Tibial artery (tissue), 4 donors: ENCODE measurements at regions of chr18 and their contacts with region 1.

Region 1: GRCh38 chr18:50374753-50375391 is at the start of gene SKA1:
- DNase-seq: peak; percentile 85 to 94
- H3K4me3 ChIP-seq: peak within 1 kb of the TSS; percentile 45 to 59
- H3K27ac ChIP-seq: peak within 1 kb of the TSS; percentile 56 to 77
- H3K4me1 ChIP-seq: peaks cover 0 to 12% (median 7%) of the 10 kb centered on the region in 4 donors
- H3K27me3 ChIP-seq: no peaks in the 10 kb centered on the region
- CTCF ChIP-seq: no peak

Region 2: DNA sequence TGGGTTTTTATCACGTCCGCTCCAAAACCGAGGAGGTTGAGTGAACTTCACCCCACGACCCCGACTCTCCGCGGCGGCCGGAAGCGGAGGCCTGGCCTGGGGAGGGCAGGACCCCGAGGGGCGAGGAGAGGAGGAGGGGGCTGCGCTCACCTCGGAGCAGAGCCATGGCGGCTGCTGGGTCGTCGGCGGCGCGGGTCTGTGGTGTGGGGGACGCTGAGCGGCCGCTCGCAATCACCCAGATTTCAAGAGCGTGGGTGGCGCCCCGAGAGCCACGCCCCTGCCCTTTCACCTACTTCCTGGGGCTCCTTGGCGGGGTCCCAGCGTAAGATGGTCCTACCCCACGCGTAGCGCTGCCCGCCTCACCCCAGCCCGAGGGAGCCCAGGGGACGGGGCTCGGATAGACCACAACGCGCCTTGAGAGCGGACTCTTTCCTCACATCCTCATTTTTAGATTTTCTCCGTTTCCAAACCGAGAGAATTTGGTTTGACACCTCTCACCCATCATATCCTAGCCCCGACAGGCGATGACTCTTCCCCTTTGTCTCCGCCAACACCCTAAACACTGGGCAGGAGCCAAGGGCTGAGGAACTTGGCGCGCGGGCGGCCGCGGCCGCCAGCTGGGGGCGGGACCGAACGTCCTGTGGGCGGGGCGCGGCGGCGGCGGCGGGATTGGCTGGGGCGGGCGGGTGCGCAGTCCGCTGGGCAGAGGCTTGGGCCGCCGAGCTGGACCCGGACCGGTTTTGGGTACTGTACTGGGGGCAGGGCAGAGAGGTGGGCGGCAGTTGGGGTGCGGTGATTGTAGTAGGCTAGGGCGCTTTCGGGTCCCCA is 561.3 kb before region 1 on chr18 and contains the start of gene ACAA2:
- intact Hi-C with region 1: loop called (anchors 10 kb)
- DNase-seq: peak; percentile 78 to 93
- H3K4me3 ChIP-seq: peak within 1 kb of the TSS; percentile 71 to 76
- H3K27ac ChIP-seq: peak within 1 kb of the TSS; percentile 93 to 97
- H3K4me1 ChIP-seq: peaks cover 0 to 14% (median 5%) of the 10 kb centered on the region in 4 donors
- H3K27me3 ChIP-seq: no peaks in the 10 kb centered on the region
- CTCF ChIP-seq: no peak

Region 3: DNA sequence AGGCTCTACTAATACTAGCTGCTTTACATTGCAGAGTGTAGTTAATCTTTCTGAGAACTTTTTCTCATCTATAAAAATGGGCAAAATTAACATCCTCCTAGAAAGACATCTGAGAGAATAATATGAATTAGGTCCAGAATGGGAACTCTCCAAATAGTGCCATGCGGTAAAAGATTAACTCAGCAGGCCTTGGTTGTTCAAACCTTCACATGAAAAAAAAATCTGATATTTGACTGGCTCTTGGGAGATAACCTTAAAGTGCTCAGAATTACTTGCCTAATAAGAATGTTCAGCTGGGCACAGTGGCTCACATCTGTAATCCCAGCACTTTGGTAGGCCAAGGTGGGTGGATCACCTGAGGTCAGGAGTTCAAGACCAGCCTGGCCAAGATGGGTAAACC is 81.8 kb before region 1 on chr18:
- intact Hi-C with region 1: loop called (anchors 5 kb)
- DNase-seq: no peak
- H3K4me3 ChIP-seq: no peak overlapping the region
- H3K27ac ChIP-seq: no peak overlapping the region
- H3K4me1 ChIP-seq: peaks cover 0 to 6% (median 2%) of the 10 kb centered on the region in 4 donors
- H3K27me3 ChIP-seq: peaks cover 0 to 7% of the 10 kb centered on the region in 2 donors
- CTCF ChIP-seq: no peak